ENCODE measurements at regions of chr11 and their contacts with region 1.

Region 1: GRCh38 chr11:35305670-35306382 is 113.5 kb downstream of the SLC1A2 start:
- DNase-seq: peak in 4 of 5 donors; percentile 35 to 49 (median 44)
- H3K4me3 ChIP-seq: no peak overlapping the region
- H3K4me3 Mint-ChIP-seq: peak overlapping the region; percentile 58 to 85 (median 79)
- H3K27ac ChIP-seq: no peak overlapping the region
- H3K27ac Mint-ChIP-seq: peak overlapping the region; percentile 8 to 95 (median 90)
- H3K4me1 ChIP-seq: peaks cover 24% of the 10 kb centered on the region
- H3K4me1 Mint-ChIP-seq: peaks cover 15 to 29% (median 25%) of the 10 kb centered on the region in 4 donors
- H3K27me3 ChIP-seq: no peaks in the 10 kb centered on the region
- H3K27me3 Mint-ChIP-seq: no peaks in the 10 kb centered on the region

Region 2: GRCh38 chr11:34997952-34998528 is 307.8 kb before region 1 on chr11:
- CTCF ChIA-PET with region 1: interaction called, 95 read pairs
- POLR2A ChIA-PET with region 1: interaction called, 11 read pairs
- intact Hi-C with region 1: loop called (anchors 1 kb)
- DNase-seq: peak in 4 of 5 donors; percentile 37 to 48 (median 44)
- H3K4me3 ChIP-seq: no peak overlapping the region
- H3K4me3 Mint-ChIP-seq: peak overlapping the region in 6 of 8 donors; percentile 62 to 78 (median 75)
- H3K27ac ChIP-seq: peak overlapping the region; percentile 45
- H3K27ac Mint-ChIP-seq: peak overlapping the region; percentile 57 to 95 (median 86)
- H3K4me1 ChIP-seq: peaks cover 24% of the 10 kb centered on the region
- H3K4me1 Mint-ChIP-seq: peaks cover 20 to 34% (median 24%) of the 10 kb centered on the region in 4 donors
- H3K27me3 ChIP-seq: no peaks in the 10 kb centered on the region
- H3K27me3 Mint-ChIP-seq: no peaks in the 10 kb centered on the region

Region 3: GRCh38 chr11:35173011-35173511 is 132.8 kb before region 1 on chr11:
- CTCF ChIA-PET with region 1: interaction called, 15 read pairs
- POLR2A ChIA-PET with region 1: interaction called, 4 read pairs
- intact Hi-C with region 1: no loop called
- DNase-seq: peak in 1 of 5 donors; percentile 17
- H3K4me3 ChIP-seq: peak overlapping the region in 1 of 2 donors; percentile 3
- H3K4me3 Mint-ChIP-seq: peak overlapping the region in 7 of 8 donors; percentile 63 to 80 (median 71)
- H3K27ac ChIP-seq: peak overlapping the region; percentile 65
- H3K27ac Mint-ChIP-seq: peak overlapping the region; percentile 82 to 100 (median 93)
- H3K4me1 ChIP-seq: peaks cover 96% of the 10 kb centered on the region
- H3K4me1 Mint-ChIP-seq: peaks cover 86 to 95% (median 91%) of the 10 kb centered on the region in 4 donors
- H3K27me3 ChIP-seq: no peaks in the 10 kb centered on the region
- H3K27me3 Mint-ChIP-seq: no peaks in the 10 kb centered on the region

Region 4: GRCh38 chr11:35272391-35272902 is 33.4 kb before region 1 on chr11:
- CTCF ChIA-PET with region 1: interaction called, 13 read pairs
- POLR2A ChIA-PET with region 1: no interaction called
- intact Hi-C with region 1: no loop called
- DNase-seq: peak; percentile 25 to 68 (median 30)
- H3K4me3 ChIP-seq: peak overlapping the region in 1 of 2 donors; percentile 3
- H3K4me3 Mint-ChIP-seq: peak overlapping the region in 7 of 8 donors; percentile 35 to 73 (median 56)
- H3K27ac ChIP-seq: no peak overlapping the region
- H3K27ac Mint-ChIP-seq: peak overlapping the region; percentile 23 to 96 (median 81)
- H3K4me1 ChIP-seq: peaks cover 30% of the 10 kb centered on the region
- H3K4me1 Mint-ChIP-seq: peaks cover 19 to 53% (median 40%) of the 10 kb centered on the region in 4 donors
- H3K27me3 ChIP-seq: no peaks in the 10 kb centered on the region
- H3K27me3 Mint-ChIP-seq: no peaks in the 10 kb centered on the region

Region 5: DNA sequence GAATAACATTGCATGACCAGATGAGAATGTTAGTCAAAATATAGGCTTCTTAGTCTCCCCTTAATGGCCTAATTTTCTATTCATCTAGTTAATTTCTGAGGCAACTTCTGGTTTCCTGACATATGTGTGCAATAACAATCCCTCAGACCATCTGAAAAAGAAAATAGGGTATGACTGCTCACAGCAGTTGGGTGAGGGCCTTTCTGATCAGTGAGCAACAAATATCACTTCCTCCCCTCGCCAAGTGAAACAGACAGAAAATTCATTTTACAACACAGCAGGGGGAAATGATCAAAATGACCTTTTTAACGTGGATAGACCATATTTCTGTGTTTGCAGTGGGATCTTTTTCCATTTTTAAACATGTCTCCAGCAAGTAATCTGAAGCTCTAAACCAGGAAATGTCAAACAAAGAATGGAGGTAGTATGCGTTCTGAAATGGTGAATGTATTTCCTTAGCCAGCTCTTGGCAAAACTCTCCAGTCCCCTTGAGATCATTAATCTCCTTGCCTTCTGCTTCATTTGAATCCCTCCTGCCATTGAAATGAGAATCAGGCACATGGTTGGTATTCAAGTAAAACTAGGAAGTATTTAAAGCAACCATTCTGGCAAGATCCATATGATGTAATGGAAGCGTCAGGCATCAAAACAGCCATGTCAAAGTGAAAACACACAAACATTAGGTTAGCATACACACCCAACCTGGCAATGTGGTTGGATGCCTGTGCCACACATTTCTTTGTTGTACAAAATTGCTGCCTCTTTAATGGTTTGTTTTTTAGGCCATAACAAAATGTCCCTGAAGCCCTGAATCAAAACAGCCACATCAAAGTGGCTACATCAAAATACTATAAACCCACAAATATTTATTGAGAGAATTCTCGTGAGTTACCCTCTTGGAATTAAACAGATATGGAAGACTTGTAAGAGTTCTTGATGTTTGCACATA is 13.4 kb after region 1 on chr11:
- CTCF ChIA-PET with region 1: interaction called, 20 read pairs
- POLR2A ChIA-PET with region 1: interaction called, 5 read pairs
- intact Hi-C with region 1: no loop called
- DNase-seq: peak in 4 of 5 donors; percentile 14 to 51 (median 24)
- H3K4me3 ChIP-seq: no peak overlapping the region
- H3K4me3 Mint-ChIP-seq: peak overlapping the region in 6 of 8 donors; percentile 23 to 33 (median 29)
- H3K27ac ChIP-seq: no peak overlapping the region
- H3K27ac Mint-ChIP-seq: peak overlapping the region in 6 of 7 donors; percentile 0 to 87 (median 60)
- H3K4me1 ChIP-seq: peaks cover 24% of the 10 kb centered on the region
- H3K4me1 Mint-ChIP-seq: peaks cover 21 to 36% (median 28%) of the 10 kb centered on the region in 4 donors
- H3K27me3 ChIP-seq: no peaks in the 10 kb centered on the region
- H3K27me3 Mint-ChIP-seq: no peaks in the 10 kb centered on the region

Measured in CD4-positive, alpha-beta memory T cell (primary cell).